OCI-LY7 (cell line): ENCODE measurements at regions of chr1 and their contacts with region 1.

Region 1: DNA sequence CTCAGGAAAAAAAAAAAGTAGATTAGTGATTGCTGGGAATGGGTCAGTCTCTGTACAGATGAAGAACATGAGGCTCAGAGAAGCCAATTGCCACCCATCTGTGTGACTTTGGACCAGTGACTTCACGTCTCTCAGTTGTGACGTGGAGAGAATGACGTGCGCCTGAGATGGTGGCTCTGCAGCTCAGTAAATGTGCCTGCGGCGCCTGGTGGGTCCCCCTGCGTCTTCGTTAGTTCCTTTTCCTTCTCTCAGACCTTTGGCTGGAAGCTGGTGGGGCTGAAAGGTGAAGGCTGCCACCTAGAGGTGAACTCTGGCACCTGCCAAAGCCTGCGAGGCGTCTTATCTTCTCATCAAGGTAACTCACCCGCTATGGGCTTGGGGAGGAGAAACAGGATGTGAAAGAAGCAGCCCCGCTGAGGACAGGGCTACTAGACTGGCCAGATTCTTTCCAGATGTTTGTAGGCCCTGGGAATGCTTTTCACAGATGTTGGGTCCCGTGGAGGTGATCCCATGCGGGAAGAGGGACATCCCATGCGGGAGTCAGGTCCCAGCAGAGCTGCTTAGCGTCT is 8.7 kb upstream of the E2F2 start:
- DNase-seq: peak; percentile 97
- H3K4me3 ChIP-seq: peak overlapping the region; percentile 47
- H3K27ac ChIP-seq: peak overlapping the region; percentile 46
- H3K4me1 ChIP-seq: peaks cover 63% of the 10 kb centered on the region
- CTCF ChIP-seq: peak; percentile 99

Region 2: GRCh38 chr1:23367791-23368561 is 171.8 kb before region 1 on chr1:
- CTCF ChIA-PET with region 1: no interaction called
- POLR2A ChIA-PET with region 1: no interaction called
- intact Hi-C with region 1: loop called (anchors 2 kb)
- DNase-seq: peak; percentile 99
- H3K4me3 ChIP-seq: peak overlapping the region; percentile 77
- H3K27ac ChIP-seq: peak overlapping the region; percentile 76
- H3K4me1 ChIP-seq: peaks cover 28% of the 10 kb centered on the region
- CTCF ChIP-seq: no peak

Region 3: GRCh38 chr1:23473037-23473691 is 66.6 kb before region 1 on chr1:
- CTCF ChIA-PET with region 1: no interaction called
- POLR2A ChIA-PET with region 1: no interaction called
- intact Hi-C with region 1: no loop called
- DNase-seq: no peak
- H3K4me3 ChIP-seq: no peak overlapping the region
- H3K27ac ChIP-seq: no peak overlapping the region
- H3K4me1 ChIP-seq: no peaks in the 10 kb centered on the region
- CTCF ChIP-seq: no peak

Region 4: DNA sequence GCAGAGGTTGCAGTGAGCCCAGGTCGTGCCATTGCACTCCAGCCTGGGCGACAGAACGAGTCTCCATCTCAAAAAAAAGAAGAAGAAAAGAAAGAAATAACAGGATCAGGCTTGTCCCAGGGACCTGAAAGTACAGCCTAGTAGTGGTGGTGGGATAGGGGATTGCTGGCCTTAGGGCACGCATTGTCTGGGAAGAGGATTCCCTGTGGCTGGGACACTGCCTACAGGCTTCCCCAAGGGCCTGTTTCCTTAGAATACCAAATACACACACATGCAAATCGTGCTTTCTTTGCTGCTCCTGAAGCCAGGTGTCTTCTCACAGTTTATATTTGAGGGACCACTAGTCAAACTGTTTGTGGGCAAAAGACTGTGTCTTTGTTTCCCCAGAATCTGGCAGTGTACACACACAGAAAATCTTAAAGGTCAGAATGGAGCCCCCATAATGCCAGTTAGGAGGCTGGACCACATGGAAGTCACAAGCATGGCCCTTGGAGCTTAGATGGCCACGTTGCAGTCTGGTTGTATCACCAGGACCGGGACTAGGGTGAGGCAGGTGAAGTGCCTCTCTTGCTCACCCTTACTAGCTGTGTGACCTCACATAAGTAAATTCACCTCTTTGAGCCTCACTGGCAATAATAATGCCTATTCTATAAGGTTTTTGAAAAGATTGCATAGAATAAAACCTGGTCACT is 43.1 kb before region 1 on chr1:
- CTCF ChIA-PET with region 1: interaction called, 18 read pairs
- POLR2A ChIA-PET with region 1: interaction called, 6 read pairs
- intact Hi-C with region 1: loop called (anchors 1 kb)
- DNase-seq: no peak
- H3K4me3 ChIP-seq: no peak overlapping the region
- H3K27ac ChIP-seq: no peak overlapping the region
- H3K4me1 ChIP-seq: peaks cover 21% of the 10 kb centered on the region
- CTCF ChIP-seq: no peak

Region 5: DNA sequence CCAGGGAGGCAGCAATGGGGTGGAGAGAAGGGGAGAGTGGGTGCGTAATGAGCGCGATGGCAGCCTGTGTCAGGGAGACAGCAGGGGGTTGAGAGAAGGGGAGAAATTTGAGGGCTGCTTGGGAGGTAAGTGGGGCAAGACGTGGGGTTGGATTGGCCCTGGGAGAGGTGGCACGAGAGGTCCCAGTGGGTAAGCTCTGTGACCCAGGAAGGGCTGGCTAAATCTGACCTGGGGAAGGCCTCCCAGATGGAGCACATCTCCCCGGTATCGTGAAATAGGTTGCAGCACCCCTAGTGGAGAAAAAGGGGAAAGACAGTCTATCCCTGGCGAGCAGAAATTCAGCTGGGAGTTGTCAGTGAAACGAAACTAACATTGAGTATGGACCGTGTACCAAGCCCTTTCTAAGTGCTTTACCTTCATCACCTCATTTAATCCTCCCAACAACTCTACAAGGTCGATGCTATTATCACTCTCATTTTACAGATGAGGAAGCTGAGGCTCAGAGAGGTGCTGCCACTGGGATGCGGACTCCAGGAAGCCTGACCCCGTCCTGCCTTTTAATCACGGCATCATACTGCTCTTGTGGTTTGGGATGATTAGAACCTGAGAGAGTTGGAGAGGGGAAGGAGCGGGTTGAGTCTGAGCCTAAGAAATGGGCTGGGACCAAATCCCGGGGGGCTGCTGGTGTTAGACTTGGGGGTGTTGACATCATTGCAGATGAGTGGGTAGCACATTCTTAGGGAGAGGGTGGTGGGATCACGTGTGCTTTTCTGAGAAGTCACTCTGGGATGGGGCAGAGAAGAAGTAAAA is 95.3 kb after region 1 on chr1:
- CTCF ChIA-PET with region 1: interaction called, 35 read pairs
- POLR2A ChIA-PET with region 1: interaction called, 17 read pairs
- intact Hi-C with region 1: loop called (anchors 1 kb)
- DNase-seq: peak; percentile 82
- H3K4me3 ChIP-seq: peak overlapping the region; percentile 52
- H3K27ac ChIP-seq: peak overlapping the region; percentile 85
- H3K4me1 ChIP-seq: peaks cover 92% of the 10 kb centered on the region
- CTCF ChIP-seq: peak; percentile 93

Region 6: GRCh38 chr1:23751050-23751814 is 211.4 kb after region 1 on chr1:
- CTCF ChIA-PET with region 1: no interaction called
- POLR2A ChIA-PET with region 1: no interaction called
- intact Hi-C with region 1: loop called (anchors 2 kb)
- DNase-seq: peak; percentile 76
- H3K4me3 ChIP-seq: no peak overlapping the region
- H3K27ac ChIP-seq: no peak overlapping the region
- H3K4me1 ChIP-seq: peaks cover 7% of the 10 kb centered on the region
- CTCF ChIP-seq: peak; percentile 92